ENCODE measurements at regions of chr1 and their contacts with region 1.

Region 1: DNA sequence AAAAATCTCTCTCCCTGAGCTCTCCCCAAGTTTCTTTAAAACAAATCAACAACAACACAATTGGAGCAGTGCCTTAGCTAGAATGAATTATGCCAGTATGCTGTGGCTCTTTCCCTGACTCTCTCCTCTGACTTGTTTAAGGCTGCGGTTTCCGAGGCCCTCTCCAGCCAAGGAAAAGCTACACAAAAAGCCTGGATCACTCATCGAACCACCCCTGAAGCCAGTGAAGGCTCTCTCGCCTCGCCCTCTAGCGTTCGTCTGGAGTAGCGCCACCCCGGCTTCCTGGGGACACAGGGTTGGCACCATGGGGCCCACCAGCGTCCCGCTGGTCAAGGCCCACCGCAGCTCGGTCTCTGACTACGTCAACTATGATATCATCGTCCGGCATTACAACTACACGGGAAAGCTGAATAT is 1.9 kb downstream of the S1PR1 start:
- H3K4me3 Mint-ChIP-seq: peak overlapping the region; percentile 79
- H3K27ac Mint-ChIP-seq: peak overlapping the region; percentile 86
- H3K4me1 Mint-ChIP-seq: peaks cover 45% of the 10 kb centered on the region
- H3K27me3 Mint-ChIP-seq: peaks cover 49% of the 10 kb centered on the region

Region 2: GRCh38 chr1:100921109-100921706 is 317.5 kb before region 1 on chr1:
- intact Hi-C with region 1: loop called (anchors 2 kb)
- H3K4me3 Mint-ChIP-seq: no peak overlapping the region
- H3K27ac Mint-ChIP-seq: no peak overlapping the region
- H3K4me1 Mint-ChIP-seq: peaks cover 8% of the 10 kb centered on the region
- H3K27me3 Mint-ChIP-seq: no peaks in the 10 kb centered on the region

Region 3: DNA sequence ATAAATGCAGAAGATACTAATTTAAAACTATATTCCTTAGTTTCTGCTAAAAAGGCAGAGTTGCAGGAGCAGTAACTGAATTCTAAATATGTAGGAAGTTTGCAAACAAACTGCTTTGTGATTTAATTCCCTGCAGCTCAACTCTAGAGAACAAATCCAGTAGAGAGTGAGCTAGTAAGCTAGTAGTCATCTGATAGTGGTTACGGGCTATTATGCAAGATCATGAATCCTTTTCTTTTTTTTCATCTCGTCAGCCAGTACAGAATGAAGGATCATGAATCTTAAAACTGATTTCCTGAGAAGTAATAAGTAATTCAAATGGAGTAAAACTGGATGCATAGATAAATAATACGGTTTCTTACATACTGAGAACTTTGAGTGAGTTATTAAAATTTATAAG is 216.4 kb before region 1 on chr1:
- intact Hi-C with region 1: loop called (anchors 5 kb)
- H3K4me3 Mint-ChIP-seq: no peak overlapping the region
- H3K27ac Mint-ChIP-seq: no peak overlapping the region
- H3K4me1 Mint-ChIP-seq: peaks cover 33% of the 10 kb centered on the region
- H3K27me3 Mint-ChIP-seq: no peaks in the 10 kb centered on the region

Region 4: DNA sequence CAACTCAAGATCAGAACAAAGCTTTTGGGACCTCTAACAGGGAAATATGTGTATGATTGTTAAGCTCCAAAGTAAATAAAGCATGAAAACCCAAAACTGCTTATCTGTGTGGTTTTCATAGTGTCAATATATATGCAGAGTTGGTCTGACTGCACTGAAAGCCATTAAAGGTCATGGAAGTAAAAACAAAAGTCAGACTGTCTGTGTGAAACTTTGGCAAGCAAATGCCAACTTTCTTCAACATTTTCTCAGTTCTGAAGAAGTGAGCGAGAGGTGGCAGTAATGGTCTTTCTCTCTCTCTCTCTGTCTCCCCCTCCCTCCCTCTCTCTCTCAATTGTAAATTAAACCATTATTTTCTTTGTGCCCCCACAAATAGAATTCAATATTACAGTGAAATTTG is 101.9 kb before region 1 on chr1:
- intact Hi-C with region 1: loop called (anchors 5 kb)
- H3K4me3 Mint-ChIP-seq: no peak overlapping the region
- H3K27ac Mint-ChIP-seq: no peak overlapping the region
- H3K4me1 Mint-ChIP-seq: peaks cover 30% of the 10 kb centered on the region
- H3K27me3 Mint-ChIP-seq: no peaks in the 10 kb centered on the region

Region 5: GRCh38 chr1:101181930-101182329 is 56.8 kb before region 1 on chr1:
- intact Hi-C with region 1: loop called (anchors 10 kb)
- H3K4me3 Mint-ChIP-seq: no peak overlapping the region
- H3K27ac Mint-ChIP-seq: peak overlapping the region; percentile 52
- H3K4me1 Mint-ChIP-seq: peaks cover 36% of the 10 kb centered on the region
- H3K27me3 Mint-ChIP-seq: peaks cover 1% of the 10 kb centered on the region

Region 6: DNA sequence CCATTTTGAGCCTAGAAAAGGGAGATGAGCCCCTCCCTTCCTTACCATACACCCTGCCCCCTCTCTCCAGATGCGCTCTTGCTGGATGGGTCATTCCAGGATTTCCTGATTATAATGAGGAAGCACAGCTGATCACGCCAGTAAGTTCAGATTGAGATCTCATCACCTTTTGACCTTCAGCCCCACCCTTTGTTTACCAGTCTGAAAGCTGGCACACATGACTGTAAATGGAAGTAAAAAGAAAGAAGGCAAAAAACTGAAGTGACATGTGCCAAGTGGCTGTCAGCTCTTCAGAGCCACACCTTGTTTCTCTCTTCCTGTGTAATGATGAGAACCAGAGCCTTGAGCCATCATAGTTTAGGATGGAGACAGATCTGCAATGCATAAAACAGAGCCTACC is 26.0 kb after region 1 on chr1:
- intact Hi-C with region 1: loop called (anchors 2 kb)
- H3K4me3 Mint-ChIP-seq: no peak overlapping the region
- H3K27ac Mint-ChIP-seq: peak overlapping the region; percentile 56
- H3K4me1 Mint-ChIP-seq: peaks cover 70% of the 10 kb centered on the region
- H3K27me3 Mint-ChIP-seq: no peaks in the 10 kb centered on the region

Region 7: DNA sequence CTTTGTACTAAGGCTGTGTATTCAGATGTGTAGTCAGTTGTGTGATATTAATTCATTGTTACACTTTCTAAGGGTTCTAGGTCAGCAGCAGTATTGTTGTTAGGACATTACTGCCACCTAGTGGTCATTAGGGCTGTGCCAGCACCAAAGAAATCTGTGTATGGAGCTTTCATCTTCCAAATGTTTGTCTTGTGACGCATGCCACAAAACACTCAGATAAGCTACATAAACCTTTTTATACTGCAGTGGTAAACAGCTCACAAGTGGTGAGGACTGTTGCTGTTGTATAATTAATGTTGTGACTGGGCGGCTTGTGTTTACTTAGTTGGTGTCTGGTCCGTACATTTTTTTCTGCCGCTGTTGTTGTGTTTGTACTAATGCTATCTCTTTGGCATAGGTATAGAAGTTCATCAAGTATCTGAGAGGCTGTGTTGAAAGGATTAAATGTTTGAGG is 49.8 kb after region 1 on chr1:
- intact Hi-C with region 1: loop called (anchors 1 kb)
- H3K4me3 Mint-ChIP-seq: no peak overlapping the region
- H3K27ac Mint-ChIP-seq: peak overlapping the region; percentile 36
- H3K4me1 Mint-ChIP-seq: peaks cover 46% of the 10 kb centered on the region
- H3K27me3 Mint-ChIP-seq: peaks cover 2% of the 10 kb centered on the region

Measured in dendritic cell treated with granulocyte-macrophage colony-stimulating factor and Interleukin-4, amounts not matched to agents 40 ng/mL and 50 ng/mL, for 4 days (primary cell).